Right cardiac atrium (tissue), 5 donors: ENCODE measurements at regions of chr17 and their contacts with region 1.

Region 1: GRCh38 chr17:55513885-55514591 is 2.8 kb upstream of the SMIM36 start:
- DNase-seq: peak; percentile 60 to 84 (median 63)
- ATAC-seq: peak; percentile 72 to 96
- H3K4me3 ChIP-seq: no peak overlapping the region
- H3K27ac ChIP-seq: no peak overlapping the region
- H3K4me1 ChIP-seq: no peaks in the 10 kb centered on the region
- H3K27me3 ChIP-seq: peaks cover 3% of the 10 kb centered on the region

Region 2: GRCh38 chr17:54992797-54993639 is 521.0 kb before region 1 on chr17:
- intact Hi-C with region 1: loop called in 2 of 4 experiments (anchors 10 kb)
- DNase-seq: no peak
- ATAC-seq: peak in 1 of 2 donors; percentile 31
- H3K4me3 ChIP-seq: no peak overlapping the region
- H3K27ac ChIP-seq: no peak overlapping the region
- H3K4me1 ChIP-seq: no peaks in the 10 kb centered on the region
- H3K27me3 ChIP-seq: no peaks in the 10 kb centered on the region

Region 3: DNA sequence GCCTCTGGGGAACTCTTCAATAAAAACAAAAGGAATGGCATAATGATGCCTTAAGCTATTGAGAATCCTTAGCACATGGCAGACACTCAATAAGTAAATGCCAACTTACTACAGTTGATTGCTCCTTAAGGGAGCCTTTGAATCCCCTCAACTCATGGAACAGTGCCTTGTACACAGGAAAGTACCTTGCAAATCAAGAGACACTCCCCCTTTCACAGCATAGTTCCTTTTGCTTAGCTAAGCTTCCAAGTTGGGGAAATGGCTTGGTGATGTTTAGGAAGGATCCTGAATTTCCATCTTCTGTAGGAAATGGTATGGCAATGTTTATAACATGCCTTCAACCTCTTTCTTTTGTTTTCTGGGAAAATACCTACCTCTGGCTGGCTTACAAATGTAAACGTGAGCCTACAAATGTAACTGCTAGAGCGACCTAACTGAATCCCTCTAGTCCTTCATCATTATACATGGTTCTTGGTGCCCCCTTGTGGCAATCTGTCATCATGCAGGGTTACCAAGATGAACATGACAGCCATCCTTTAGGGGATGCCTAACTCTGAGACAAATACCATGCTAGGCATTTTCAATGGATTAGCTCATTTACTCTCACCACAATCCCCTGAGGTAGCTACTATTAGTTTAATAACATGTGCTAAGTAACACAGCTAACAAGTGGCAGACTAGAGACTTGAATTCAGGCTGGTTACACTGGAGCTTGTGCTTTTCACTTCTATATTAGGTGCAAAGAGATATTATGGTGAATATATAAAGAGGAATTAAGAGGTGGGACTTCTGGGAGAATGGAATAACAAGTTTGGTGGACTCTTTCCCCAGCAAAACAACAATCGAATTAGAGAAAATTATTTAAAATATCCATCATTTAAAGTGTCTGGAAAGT is 157.4 kb before region 1 on chr17:
- intact Hi-C with region 1: loop called in 3 of 4 experiments (anchors 5 to 10 kb)
- DNase-seq: peak; percentile 56 to 81 (median 64)
- ATAC-seq: peak; percentile 80 to 86
- H3K4me3 ChIP-seq: no peak overlapping the region
- H3K27ac ChIP-seq: no peak overlapping the region
- H3K4me1 ChIP-seq: no peaks in the 10 kb centered on the region
- H3K27me3 ChIP-seq: no peaks in the 10 kb centered on the region

Region 4: DNA sequence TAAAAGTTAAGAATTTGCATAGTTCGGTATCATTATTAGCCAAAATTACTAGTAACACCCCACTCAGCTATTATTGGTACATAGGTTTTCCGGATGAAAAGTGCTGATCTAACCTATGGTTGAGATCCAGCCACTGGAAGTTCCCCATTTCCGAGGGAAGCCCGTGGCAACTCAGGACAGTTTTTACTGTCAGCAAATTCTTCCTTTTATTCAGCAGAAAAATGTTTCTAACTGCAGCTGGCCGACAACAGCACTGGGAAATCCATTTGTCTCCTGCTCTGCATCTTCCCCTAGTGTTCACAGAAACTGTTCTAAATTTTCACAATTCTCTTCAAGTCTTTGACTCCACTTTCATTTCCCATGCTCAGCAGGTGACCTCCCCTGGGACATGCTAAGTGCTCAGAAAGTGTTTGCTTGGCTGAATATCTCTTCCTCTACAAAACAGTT is 76.9 kb before region 1 on chr17:
- intact Hi-C with region 1: loop called in 1 of 4 experiments (anchors 10 kb)
- DNase-seq: peak in 1 of 3 donors; percentile 53
- ATAC-seq: no peak
- H3K4me3 ChIP-seq: no peak overlapping the region
- H3K27ac ChIP-seq: no peak overlapping the region
- H3K4me1 ChIP-seq: no peaks in the 10 kb centered on the region
- H3K27me3 ChIP-seq: no peaks in the 10 kb centered on the region

Region 5: DNA sequence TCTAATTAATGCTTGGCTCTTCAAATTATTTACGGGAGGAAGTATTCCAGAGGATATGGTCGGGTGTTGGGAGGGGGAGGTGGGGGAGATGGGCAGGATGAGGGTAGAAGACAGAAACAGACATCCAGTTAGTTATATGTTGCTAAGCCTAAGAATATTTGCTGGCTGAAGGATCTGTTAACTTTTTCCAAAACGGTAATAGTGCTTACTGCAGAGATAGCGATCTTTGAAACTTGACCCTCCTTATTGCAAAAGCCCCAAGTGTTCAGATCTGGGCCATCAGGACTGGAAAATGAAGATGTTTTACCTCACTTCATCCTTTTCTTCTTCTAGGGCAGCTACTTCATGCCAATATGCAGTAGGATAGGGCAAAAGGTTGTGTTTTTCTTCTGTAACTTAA is 65.4 kb before region 1 on chr17:
- intact Hi-C with region 1: no loop called
- DNase-seq: no peak
- ATAC-seq: no peak
- H3K4me3 ChIP-seq: no peak overlapping the region
- H3K27ac ChIP-seq: no peak overlapping the region
- H3K4me1 ChIP-seq: peaks cover 1% of the 10 kb centered on the region
- H3K27me3 ChIP-seq: no peaks in the 10 kb centered on the region

Region 6: DNA sequence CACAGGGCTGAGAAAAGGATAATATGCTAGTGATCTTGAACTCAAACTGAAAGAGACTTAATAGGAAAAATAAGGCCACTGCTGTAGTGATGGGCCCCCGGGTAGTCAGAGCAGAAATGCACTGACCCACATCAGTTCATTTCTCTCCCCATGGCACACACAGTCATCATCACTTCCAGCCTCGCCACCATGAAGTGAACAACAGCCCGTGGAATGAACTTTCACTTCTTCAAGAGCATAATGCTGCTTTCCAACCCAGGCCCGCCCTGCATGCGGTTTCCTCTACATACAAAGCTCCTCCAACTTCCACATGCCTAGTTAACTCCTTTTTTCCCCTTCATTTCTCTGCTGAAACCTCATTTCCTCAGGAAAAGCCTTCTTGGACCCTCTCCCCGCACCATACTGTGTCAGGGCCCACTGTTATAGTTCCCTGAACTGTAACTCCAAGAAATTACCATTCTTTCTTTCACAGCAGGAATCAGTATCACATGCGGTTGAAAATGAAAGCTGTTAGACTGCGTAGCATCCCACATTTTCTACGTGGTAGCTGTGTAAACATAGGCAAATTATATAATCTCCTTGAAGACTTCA is 63.1 kb after region 1 on chr17:
- intact Hi-C with region 1: no loop called
- DNase-seq: peak; percentile 47 to 85 (median 68)
- ATAC-seq: peak; percentile 82 to 84
- H3K4me3 ChIP-seq: peak overlapping the region; percentile 27
- H3K27ac ChIP-seq: peak overlapping the region; percentile 89
- H3K4me1 ChIP-seq: no peaks in the 10 kb centered on the region
- H3K27me3 ChIP-seq: no peaks in the 10 kb centered on the region